Adrenal gland (tissue), 19 donors: ENCODE measurements at regions of chrX and their contacts with region 1.

Region 1: GRCh38 chrX:120769576-120770341 is 105.9 kb downstream of the CT47B1 start:
- DNase-seq: peak; percentile 19 to 51 (median 24)
- H3K4me3 ChIP-seq: no peak overlapping the region
- H3K27ac ChIP-seq: no peak overlapping the region
- H3K4me1 ChIP-seq: peaks cover 0 to 3% of the 10 kb centered on the region in 2 donors
- H3K27me3 ChIP-seq: no peaks in the 10 kb centered on the region
- CTCF ChIP-seq: peak; percentile 8 to 52 (median 44)
- POLR2A ChIP-seq: no peak

Region 2: GRCh38 chrX:120549483-120550452 is 220.0 kb before region 1 on chrX:
- intact Hi-C with region 1: no loop called
- DNase-seq: peak in 6 of 7 donors; percentile 43 to 68 (median 53)
- H3K4me3 ChIP-seq: no peak overlapping the region
- H3K27ac ChIP-seq: peak overlapping the region in 2 of 5 donors; percentile 19 to 52
- H3K4me1 ChIP-seq: peaks cover 0 to 7% of the 10 kb centered on the region in 2 donors
- H3K27me3 ChIP-seq: no peaks in the 10 kb centered on the region
- CTCF ChIP-seq: no peak
- POLR2A ChIP-seq: no peak

Region 3: DNA sequence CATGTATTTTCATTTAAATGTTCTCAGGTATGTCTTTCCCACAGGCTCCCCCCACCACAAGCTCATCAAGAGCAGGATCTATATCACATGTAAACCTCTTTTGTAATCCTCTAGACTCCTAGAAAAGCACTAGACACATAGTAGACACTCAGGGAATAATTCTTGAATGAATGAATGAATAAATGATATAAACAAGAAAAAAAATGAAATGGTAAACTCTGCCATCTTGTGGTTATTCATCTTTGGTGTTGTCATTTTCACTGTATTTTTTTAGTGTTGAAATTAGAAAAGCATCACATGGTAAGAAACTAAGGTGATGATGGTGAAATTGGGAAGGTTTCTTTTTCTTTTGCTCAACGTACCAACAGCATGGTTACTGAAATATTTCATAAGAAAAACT is 105.7 kb before region 1 on chrX:
- intact Hi-C with region 1: loop called in 1 of 2 experiments (anchors 10 kb)
- DNase-seq: no peak
- H3K4me3 ChIP-seq: no peak overlapping the region
- H3K27ac ChIP-seq: no peak overlapping the region
- H3K4me1 ChIP-seq: no peaks in the 10 kb centered on the region
- H3K27me3 ChIP-seq: no peaks in the 10 kb centered on the region
- CTCF ChIP-seq: peak in 4 of 6 experiments; percentile 24 to 47 (median 35)
- POLR2A ChIP-seq: no peak